ENCODE measurements at regions of chr12 and their contacts with region 1.

Region 1: GRCh38 chr12:20174528-20175175 is 193.7 kb upstream of the PDE3A start:
- DNase-seq: no peak
- H3K4me3 ChIP-seq: no peak overlapping the region
- H3K4me3 Mint-ChIP-seq: no peak overlapping the region
- H3K27ac Mint-ChIP-seq: no peak overlapping the region
- H3K4me1 ChIP-seq: peaks cover 8% of the 10 kb centered on the region; the same call in 1 of the 2 replicates
- H3K4me1 Mint-ChIP-seq: peaks cover 8% of the 10 kb centered on the region
- H3K27me3 ChIP-seq: no peaks in the 10 kb centered on the region
- H3K27me3 Mint-ChIP-seq: no peaks in the 10 kb centered on the region
- CTCF ChIP-seq: no peak

Region 2: GRCh38 chr12:20188930-20189653 is 14.4 kb after region 1 on chr12:
- CTCF ChIA-PET with region 1: no interaction called
- POLR2A ChIA-PET with region 1: no interaction called
- intact Hi-C with region 1: loop called (anchors 2 kb)
- DNase-seq: peak; percentile 56 to 72
- H3K4me3 ChIP-seq: no peak overlapping the region
- H3K4me3 Mint-ChIP-seq: peak overlapping the region; percentile 31
- H3K27ac Mint-ChIP-seq: peak overlapping the region; percentile 3
- H3K4me1 ChIP-seq: peaks cover 33% of the 10 kb centered on the region
- H3K4me1 Mint-ChIP-seq: peaks cover 23% of the 10 kb centered on the region
- H3K27me3 ChIP-seq: no peaks in the 10 kb centered on the region
- H3K27me3 Mint-ChIP-seq: no peaks in the 10 kb centered on the region
- CTCF ChIP-seq: no peak